Lower leg skin (tissue), 4 donors: ENCODE measurements at regions of chr6 and their contacts with region 1.

Region 1: GRCh38 chr6:138287144-138287955 is 69.1 kb upstream of the PBOV1 start:
- DNase-seq: peak in 1 of 2 donors; percentile 21
- H3K4me3 ChIP-seq: no peak overlapping the region
- CTCF ChIP-seq: no peak
- POLR2A ChIP-seq: no peak

Region 2: DNA sequence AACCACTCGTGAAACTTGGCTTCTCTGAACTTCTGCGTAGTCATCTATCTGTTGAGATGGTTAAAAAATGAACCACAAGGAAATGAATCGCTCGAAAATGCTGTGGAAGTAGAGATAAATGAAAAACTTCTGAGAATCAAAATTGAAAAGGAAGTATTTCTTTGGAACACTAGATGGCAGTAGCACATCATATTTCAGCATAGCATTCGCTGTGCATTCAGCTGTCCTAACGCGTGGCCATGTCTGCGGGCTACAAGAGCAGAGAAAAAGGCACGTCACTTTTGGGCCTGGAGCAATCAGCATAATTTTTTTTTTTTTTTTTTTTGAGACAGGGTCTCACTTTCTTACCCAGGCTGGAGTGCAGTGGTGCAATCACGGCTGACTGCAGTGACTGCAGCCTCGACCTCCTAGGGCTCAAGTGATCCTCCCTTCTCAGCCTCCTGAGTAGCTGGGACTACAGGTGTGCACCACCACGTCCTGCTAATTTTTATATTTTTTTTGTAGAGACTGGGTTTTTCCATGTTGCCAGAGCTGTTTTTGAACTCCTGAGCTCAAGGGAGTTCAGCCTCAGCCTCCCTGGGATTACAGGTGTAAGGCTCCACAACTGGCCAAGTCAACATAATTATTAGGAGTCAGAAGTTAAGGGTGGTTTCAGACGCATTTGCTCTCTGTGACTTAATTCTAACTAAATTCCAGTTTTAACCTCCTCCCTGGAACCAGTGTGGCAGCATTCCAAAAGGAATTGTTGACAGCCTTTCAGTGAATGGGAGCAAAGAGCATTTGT is 171.3 kb before region 1 on chr6:
- intact Hi-C with region 1: loop called (anchors 10 kb)
- DNase-seq: no peak
- H3K4me3 ChIP-seq: no peak overlapping the region
- CTCF ChIP-seq: peak in 1 of 3 donors; percentile 25
- POLR2A ChIP-seq: no peak